ENCODE measurements at regions of chr3 and their contacts with region 1.

Region 1: GRCh38 chr3:27681245-27681748 is 40.8 kb downstream of the EOMES start:
- DNase-seq: no peak
- ATAC-seq: peak; percentile 61
- H3K4me3 Mint-ChIP-seq: peak overlapping the region; percentile 56
- H3K27ac Mint-ChIP-seq: peak overlapping the region; percentile 98
- H3K4me1 Mint-ChIP-seq: peaks cover 27% of the 10 kb centered on the region
- H3K27me3 Mint-ChIP-seq: no peaks in the 10 kb centered on the region
- CTCF ChIP-seq: peak; percentile 60

Region 2: GRCh38 chr3:27467545-27467944 is 213.8 kb before region 1 on chr3:
- CTCF ChIA-PET with region 1: interaction called, 11 read pairs
- POLR2A ChIA-PET with region 1: no interaction called
- DNase-seq: no peak
- ATAC-seq: no peak; the same call in 1 of the 2 replicates
- H3K4me3 Mint-ChIP-seq: no peak overlapping the region
- H3K27ac Mint-ChIP-seq: no peak overlapping the region
- H3K4me1 Mint-ChIP-seq: peaks cover 37% of the 10 kb centered on the region
- H3K27me3 Mint-ChIP-seq: no peaks in the 10 kb centered on the region
- CTCF ChIP-seq: no peak

Region 3: GRCh38 chr3:27544372-27544865 is 136.9 kb before region 1 on chr3:
- CTCF ChIA-PET with region 1: no interaction called
- POLR2A ChIA-PET with region 1: no interaction called
- DNase-seq: no peak
- ATAC-seq: no peak
- H3K4me3 Mint-ChIP-seq: no peak overlapping the region
- H3K27ac Mint-ChIP-seq: peak overlapping the region; percentile 51; the same call in 1 of the 2 replicates
- H3K4me1 Mint-ChIP-seq: peaks cover 36% of the 10 kb centered on the region
- H3K27me3 Mint-ChIP-seq: no peaks in the 10 kb centered on the region
- CTCF ChIP-seq: no peak

Region 4: GRCh38 chr3:27632431-27633223 is 48.7 kb before region 1 on chr3:
- CTCF ChIA-PET with region 1: interaction called, 12 read pairs
- POLR2A ChIA-PET with region 1: interaction called, 5 read pairs
- DNase-seq: peak; percentile 64
- ATAC-seq: peak; percentile 97
- H3K4me3 Mint-ChIP-seq: peak overlapping the region; percentile 66
- H3K27ac Mint-ChIP-seq: peak overlapping the region; percentile 41; the same call in 1 of the 2 replicates
- H3K4me1 Mint-ChIP-seq: peaks cover 13% of the 10 kb centered on the region
- H3K27me3 Mint-ChIP-seq: peaks cover 21% of the 10 kb centered on the region
- CTCF ChIP-seq: no peak

Region 5: DNA sequence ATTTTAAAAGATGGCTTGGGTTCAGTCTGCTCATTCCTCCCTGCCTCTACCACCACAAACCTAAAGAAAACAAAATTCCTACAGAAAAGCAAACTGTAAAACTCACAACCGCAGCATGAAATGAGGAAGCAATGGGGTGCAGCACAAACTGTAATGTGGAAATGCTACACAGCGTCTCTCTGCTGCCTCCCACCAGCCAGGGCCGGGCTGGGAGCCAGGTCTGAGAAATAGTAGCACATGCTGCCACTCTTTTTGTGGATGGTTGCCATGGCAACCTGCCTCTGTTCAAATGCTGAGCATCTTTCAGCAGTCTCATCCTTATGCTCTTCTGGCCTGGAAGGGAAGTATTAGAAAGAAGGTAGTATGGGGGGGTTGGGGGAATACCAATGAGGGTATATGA is 14.6 kb before region 1 on chr3:
- CTCF ChIA-PET with region 1: interaction called, 17 read pairs
- POLR2A ChIA-PET with region 1: interaction called, 3 read pairs
- DNase-seq: peak; percentile 81
- ATAC-seq: peak; percentile 90
- H3K4me3 Mint-ChIP-seq: peak overlapping the region; percentile 55
- H3K27ac Mint-ChIP-seq: peak overlapping the region; percentile 98
- H3K4me1 Mint-ChIP-seq: peaks cover 42% of the 10 kb centered on the region
- H3K27me3 Mint-ChIP-seq: no peaks in the 10 kb centered on the region
- CTCF ChIP-seq: no peak

Region 6: GRCh38 chr3:27805282-27805681 is 124.0 kb after region 1 on chr3:
- CTCF ChIA-PET with region 1: no interaction called
- POLR2A ChIA-PET with region 1: no interaction called
- DNase-seq: no peak
- ATAC-seq: no peak
- H3K4me3 Mint-ChIP-seq: no peak overlapping the region
- H3K27ac Mint-ChIP-seq: no peak overlapping the region
- H3K4me1 Mint-ChIP-seq: peaks cover 7% of the 10 kb centered on the region
- H3K27me3 Mint-ChIP-seq: no peaks in the 10 kb centered on the region
- CTCF ChIP-seq: no peak